HEK293 (cell line): ENCODE measurements at regions of chr22 and their contacts with region 1.

Region 1: GRCh38 chr22:41517172-41518047 is 26.9 kb downstream of the POLR3H start:
- H3K4me3 ChIP-seq: no peak overlapping the region
- H3K27ac ChIP-seq: no peak overlapping the region
- H3K4me1 ChIP-seq: peaks cover 10% of the 10 kb centered on the region
- CTCF ChIP-seq: peak; percentile 80

Region 2: DNA sequence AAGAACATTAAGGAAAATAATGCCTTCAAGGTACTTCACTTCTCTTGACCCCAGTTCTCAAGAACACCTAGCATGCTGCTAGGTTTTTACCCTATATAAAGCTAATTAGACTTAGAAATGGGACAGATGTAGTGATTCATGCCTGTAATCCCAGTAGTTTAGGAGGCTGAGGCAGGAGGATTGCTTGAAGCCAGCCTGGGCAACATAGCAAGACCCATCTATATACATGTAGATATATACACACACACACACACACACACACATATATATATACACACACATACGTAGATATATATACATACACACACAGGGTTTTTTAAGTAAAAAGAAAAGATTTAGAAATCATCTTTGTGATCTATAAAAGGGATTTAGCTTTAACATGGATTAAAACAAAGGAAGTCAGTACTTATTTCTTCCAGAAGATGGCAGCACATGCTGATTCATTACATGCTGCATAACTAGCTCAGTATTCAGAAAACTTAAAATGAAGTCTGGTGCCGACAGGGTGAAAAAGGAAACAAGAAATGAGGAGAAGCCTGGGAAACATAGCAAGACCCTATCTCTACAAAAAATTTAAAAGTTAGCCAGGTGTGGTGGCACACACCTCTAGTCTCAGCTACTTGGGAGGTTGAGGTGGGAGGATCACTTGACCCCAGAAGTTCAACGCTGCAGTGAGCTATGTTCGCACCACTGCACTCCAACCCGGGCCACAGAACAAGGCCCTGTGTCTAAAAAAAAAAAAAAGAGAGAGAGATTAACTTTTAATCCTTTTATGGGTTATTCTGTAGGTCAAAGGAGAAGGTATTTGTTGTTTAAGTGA is 594.7 kb before region 1 on chr22:
- CTCF ChIA-PET with region 1: interaction called, 11 read pairs
- POLR2A ChIA-PET with region 1: no interaction called
- H3K4me3 ChIP-seq: no peak overlapping the region
- H3K27ac ChIP-seq: no peak overlapping the region
- H3K4me1 ChIP-seq: no peaks in the 10 kb centered on the region
- CTCF ChIP-seq: 0 out of 2 replicates have a peak, but pooled peaks have one; percentile 49

Region 3: GRCh38 chr22:41403532-41404318 is 113.7 kb before region 1 on chr22:
- CTCF ChIA-PET with region 1: interaction called, 301 read pairs
- POLR2A ChIA-PET with region 1: interaction called, 6 read pairs
- H3K4me3 ChIP-seq: no peak overlapping the region
- H3K27ac ChIP-seq: no peak overlapping the region
- H3K4me1 ChIP-seq: no peaks in the 10 kb centered on the region
- CTCF ChIP-seq: peak; percentile 98

Region 4: DNA sequence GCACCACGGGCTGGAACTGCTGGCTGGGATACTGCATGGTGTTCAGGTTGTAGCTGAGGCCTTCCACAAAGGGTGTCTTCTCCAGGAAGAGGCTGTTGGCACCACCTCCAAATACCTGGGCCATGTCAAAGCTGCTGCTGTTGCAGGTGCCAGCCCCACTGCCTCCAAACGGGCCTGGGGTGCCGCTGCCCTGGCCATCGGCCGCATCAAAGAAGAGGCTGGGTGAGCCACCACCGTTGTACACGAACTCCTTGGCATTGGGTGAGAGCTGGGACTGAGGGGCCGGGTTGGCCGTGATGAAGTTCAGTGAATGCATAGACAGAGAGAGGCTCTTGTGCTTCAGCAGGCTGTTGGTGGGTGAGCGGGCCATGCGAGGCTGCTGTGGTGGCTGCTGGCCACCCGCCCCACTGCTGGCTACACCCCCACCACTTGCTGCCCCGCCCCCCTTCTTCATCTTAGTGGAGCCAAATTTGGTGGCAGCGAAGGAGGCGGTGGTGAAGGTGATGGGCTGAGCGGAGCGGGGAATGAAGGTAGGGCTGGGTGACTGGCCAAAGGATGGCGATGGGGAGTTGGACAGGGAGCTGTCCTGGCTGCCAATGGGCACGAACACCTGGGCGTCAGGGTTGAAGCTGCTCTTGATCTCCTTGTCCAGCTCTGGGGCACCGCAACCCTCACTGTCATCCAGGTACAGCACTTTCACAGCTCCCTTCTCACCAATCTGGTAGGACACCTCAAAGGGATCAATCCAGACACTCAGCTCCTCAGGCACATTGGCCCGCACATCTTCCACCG is 80.9 kb before region 1 on chr22:
- CTCF ChIA-PET with region 1: interaction called, 11 read pairs
- POLR2A ChIA-PET with region 1: no interaction called
- H3K4me3 ChIP-seq: no peak overlapping the region
- H3K27ac ChIP-seq: peak overlapping the region; percentile 37; the same call in 1 of the 2 replicates
- H3K4me1 ChIP-seq: peaks cover 3% of the 10 kb centered on the region
- CTCF ChIP-seq: no peak

Region 5: DNA sequence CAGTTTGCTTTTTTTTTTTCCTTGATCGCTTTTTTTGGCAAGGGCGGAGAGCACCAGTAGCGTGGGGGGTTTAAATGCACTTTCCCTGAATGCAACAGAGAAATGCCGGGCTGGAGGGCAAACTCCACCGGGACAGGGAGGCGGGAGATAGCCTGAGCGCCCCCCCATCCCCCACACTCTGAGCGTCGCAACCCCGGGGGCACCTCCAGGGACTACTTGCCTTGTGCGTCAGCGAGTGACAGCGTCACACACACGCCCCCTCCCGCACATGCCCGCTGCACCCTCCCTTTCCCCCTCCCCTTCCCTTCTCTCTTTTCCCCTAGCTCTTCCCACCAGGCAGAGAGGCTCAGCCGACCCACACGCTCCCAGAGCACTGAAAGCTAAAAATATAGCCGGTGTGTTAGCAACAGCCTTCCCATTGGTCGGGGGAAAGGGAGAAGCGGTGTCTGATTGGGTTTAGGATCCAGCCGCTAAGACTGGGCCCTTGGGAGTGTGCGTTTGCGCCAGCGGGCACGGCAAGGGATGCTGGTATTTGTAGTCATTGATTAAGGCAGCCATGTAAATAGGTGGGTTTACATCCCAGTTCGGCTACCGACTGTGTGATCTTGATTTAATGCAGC is 69.1 kb before region 1 on chr22:
- CTCF ChIA-PET with region 1: interaction called, 17 read pairs
- POLR2A ChIA-PET with region 1: interaction called, 24 read pairs
- H3K4me3 ChIP-seq: peak overlapping the region; percentile 90
- H3K27ac ChIP-seq: peak overlapping the region; percentile 100
- H3K4me1 ChIP-seq: no peaks in the 10 kb centered on the region
- CTCF ChIP-seq: 0 out of 2 replicates have a peak, but pooled peaks have one; percentile 14

Region 6: DNA sequence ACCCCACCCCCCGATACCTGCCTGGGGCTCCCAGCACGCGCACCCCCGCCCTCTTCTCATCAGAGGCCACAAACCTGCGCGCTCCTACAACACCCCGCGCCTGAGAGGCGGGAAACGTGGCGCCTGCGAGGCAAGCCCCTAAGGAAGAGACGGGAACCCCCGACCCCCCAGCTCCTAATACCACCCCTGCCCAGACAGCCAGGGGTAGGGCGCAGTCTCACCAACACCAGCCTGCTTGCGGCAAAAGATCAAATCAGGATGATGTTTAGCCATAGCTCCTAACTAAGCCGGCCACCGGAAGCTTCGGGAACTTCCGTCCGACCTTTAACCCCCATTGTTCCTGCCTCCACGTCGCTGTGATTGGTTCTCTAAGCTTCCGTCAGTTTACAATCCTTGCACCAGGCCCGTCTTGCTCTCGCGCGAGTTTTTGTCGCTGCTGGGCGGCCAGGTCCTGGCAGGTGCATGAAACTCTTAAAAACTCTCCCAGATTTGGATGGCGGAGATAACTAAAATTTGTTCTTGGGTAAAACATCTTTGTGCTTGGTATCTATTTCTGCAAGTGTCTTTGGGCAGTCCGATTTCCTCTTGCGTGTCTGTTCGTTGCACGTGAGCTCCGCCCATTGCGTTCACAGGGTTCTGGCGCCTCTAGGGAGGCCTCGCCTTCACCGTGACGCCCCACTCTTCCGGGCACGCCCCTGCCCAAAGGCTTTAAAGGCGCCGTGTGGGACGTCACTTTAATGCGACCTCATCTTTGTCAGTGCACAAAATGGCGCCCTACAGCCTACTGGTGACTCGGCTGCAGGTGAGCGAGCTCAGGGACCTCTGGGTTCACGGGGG is 48.8 kb before region 1 on chr22 and contains the starts of genes ACO2 and PHF5A:
- CTCF ChIA-PET with region 1: interaction called, 17 read pairs
- POLR2A ChIA-PET with region 1: interaction called, 13 read pairs
- H3K4me3 ChIP-seq: peak within 1 kb of the TSS; percentile 90
- H3K27ac ChIP-seq: peak within 1 kb of the TSS; percentile 84
- H3K4me1 ChIP-seq: no peaks in the 10 kb centered on the region
- CTCF ChIP-seq: no peak

Region 7: DNA sequence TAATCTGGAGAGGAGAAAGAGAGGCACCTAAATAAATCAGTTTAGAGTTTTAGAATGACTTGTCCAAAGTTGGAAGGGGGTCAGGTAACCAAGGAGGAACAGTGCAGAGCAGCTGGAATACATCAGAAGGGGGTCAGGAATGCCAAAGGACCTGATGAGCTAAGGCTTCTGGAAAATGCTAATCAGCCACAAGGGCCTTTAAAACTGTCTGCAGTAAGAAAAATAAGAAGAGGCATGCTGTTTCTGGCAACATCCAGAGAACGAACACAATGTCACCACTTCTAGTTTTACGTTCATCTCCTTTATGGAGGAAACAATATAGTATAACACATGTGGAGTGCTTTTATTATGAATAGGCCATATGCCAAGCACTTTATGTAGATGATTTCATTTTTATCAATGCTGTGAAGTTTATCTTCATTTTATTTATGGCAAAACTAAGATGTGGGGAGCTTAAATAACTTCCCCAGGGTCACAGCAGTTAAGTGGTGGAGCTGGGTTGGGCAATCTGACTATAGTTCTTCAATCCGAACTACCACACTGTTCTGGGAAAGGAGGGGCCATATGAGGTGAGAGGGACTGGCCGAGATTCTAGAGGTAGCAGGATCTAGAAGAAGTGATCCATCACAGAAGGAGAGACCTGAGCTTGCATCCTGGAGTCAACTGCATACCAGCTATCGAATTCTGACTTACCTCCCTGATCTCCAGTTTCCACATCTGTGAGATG is 25.9 kb before region 1 on chr22:
- CTCF ChIA-PET with region 1: interaction called, 23 read pairs
- POLR2A ChIA-PET with region 1: no interaction called
- H3K4me3 ChIP-seq: no peak overlapping the region
- H3K27ac ChIP-seq: peak overlapping the region; percentile 14; the same call in 1 of the 2 replicates
- H3K4me1 ChIP-seq: peaks cover 25% of the 10 kb centered on the region
- CTCF ChIP-seq: no peak